Right ventricle myocardium inferior (tissue), 1 donor: ENCODE measurements at regions of chr19 and their contacts with region 1.

Region 1: DNA sequence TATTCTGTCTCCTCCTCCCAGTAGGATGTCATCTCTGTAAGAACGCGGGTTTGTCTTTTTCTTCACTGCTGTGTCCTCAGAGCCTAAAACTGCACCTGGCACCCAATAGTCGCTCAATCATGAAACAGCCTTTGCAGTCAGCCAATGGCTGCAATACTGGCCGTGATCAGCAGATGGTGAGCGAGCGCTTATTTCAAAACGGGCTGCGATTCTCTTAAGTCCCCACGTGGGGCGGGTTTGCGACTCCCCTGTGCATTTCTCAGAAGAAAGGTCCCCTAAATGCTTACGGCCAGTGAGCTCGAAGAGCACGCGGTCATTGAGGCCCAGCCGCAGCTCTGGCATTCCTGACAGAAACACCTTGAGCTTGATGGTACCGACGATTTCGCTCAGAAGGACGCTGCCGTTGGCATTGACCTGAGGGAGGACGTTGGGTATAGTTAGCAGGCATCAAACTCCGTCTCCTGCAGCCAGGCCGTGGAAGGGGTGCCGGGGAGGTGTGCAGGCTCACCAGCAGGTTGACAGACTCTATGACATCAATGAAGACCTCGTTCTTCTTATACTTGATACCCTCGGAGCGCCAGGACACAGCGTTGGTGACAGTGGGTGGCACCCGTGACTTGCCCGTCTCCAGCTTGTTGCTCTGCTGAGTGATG is 6.0 kb downstream of the AP1M2 start:
- DNase-seq: peak; percentile 92
- ATAC-seq: peak; percentile 89

Region 2: GRCh38 chr19:10615429-10616023 is 34.4 kb after region 1 on chr19:
- intact Hi-C with region 1: no loop called
- DNase-seq: no peak
- ATAC-seq: no peak

Region 3: DNA sequence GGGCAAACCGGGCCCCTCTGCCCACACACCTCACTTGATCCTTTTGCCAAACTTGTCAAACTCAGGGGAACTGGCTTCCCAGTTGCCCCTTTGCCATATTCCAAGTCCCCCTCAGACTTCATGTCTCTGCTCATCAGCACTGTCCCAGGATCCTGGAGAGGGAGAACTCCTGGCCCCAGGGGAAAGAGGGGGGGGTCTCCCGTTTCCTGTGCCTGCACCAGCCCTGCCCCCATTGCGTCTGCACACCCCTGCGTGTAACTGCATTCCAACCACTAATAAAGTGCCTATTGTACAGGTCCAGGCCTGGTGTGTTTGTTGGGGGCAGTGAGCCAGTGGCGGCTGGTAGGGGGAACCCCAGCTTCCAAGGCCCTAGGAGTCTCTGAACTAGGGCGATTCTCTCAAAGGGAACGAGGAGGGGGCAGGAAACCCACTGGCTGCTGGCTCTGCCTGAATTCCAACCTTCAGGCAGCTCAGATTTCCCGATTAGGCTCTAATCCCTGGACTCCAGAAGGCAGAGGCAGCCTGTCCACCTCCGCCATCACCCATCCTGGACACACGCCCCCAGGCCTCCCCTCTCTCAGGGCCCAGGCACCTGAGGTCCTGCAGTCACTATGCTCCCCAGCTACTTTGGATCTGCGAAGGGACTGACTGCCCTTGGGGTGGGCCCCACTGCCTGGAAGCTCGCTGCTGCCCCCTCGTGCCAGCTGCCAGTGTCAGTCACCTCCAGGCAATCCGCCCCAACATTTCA is 63.3 kb after region 1 on chr19:
- intact Hi-C with region 1: loop called (anchors 1 kb)
- DNase-seq: peak; percentile 89
- ATAC-seq: peak; percentile 89

Region 4: DNA sequence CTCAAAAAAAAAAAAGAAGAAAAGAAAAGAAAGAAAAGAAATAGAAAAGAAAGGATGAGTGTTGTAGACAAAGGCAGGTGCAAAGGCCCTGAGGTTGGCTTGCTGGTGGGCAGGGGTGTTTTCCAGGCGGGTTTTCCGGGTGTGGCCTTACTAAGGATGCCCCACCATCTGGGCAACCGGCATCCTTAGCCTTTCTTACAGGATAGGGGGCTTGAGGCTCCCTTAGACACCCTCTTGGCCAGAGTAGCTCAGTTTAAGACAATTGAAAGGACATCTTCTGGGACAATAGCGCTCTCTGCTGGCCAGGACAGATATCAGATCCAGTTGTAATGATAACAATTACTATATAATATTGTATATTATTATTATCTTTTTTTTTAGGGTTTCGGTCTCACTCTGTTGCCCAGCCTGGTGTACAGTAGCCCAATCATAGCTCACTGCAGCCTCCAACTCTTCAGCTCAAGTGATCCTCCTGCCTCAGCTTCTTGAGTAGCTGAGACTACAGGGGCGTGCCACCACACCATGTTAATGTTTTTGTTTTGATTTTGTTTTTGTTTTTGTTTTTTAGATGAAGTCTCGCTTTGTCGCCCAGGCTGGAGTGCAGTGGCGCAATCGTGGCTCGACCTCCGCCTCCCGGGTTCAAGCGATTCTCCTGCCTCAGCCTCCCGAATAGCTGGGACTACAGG is 118.7 kb after region 1 on chr19:
- intact Hi-C with region 1: loop called (anchors 2 kb)
- DNase-seq: peak; percentile 23
- ATAC-seq: no peak